Posterior cingulate gyrus (tissue), 11 donors: ENCODE measurements at regions of chr1 and their contacts with region 1.

Region 1: GRCh38 chr1:167059045-167059808 is 30.9 kb downstream of the GPA33 start:
- DNase-seq: peak; percentile 48 to 96 (median 84)

Region 2: GRCh38 chr1:166838766-166839599 is 220.2 kb before region 1 on chr1 and contains the start of gene POGK:
- intact Hi-C with region 1: loop called (anchors 2 kb)
- DNase-seq: peak; percentile 89 to 99 (median 92)

Region 3: GRCh38 chr1:166884040-166884642 is 175.1 kb before region 1 on chr1:
- intact Hi-C with region 1: loop called (anchors 1 kb)
- DNase-seq: peak; percentile 66 to 96 (median 74)

Region 4: GRCh38 chr1:166910396-166910994 is 148.7 kb before region 1 on chr1:
- intact Hi-C with region 1: loop called (anchors 1 kb)
- DNase-seq: peak in 7 of 10 donors; percentile 39 to 91 (median 67)

Region 5: GRCh38 chr1:166975361-166976129 is 83.7 kb before region 1 on chr1 and contains the start of gene ILDR2:
- intact Hi-C with region 1: loop called (anchors 5 kb)
- DNase-seq: peak; percentile 50 to 94 (median 66)